ENCODE measurements at regions of chr19 and their contacts with region 1.

Region 1: DNA sequence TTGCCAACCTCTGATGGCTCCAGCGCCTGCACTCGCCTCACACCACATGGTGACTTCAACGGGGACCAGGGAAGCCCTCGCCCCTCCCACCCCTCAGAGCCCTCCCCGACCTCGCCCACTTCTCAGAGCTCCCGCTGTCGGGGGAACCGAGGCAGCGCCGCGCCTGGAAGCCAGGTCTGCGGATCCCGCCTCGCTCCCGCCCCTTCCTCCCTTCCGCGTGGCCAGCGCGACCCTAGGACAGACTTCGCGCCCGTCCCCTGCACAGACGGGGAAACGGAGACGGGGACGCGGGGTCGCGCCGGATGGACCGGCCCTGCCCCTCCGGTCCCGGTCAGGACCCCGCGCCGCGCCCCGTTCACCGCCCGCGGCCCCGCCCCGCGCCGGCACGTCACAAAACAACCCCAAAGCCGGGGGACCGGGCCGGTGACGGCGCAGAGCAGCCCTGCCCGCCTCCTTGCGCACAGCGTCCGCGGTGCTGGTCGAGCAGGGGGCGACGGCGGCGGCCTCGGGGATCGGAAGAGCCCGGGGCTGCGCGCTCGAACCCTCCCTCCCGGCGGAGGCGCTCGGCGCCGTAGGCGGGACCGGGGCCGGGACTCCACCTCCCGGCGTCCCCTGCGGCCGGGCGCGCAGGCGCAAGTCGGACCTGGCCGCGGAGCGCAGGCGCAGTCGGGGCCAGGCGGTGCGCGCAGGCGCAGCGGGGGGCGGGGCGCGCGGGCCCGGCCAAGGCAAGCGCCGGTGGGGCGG is 379 bp upstream of the CDC34 start:
- DNase-seq: peak; percentile 90
- H3K4me3 Mint-ChIP-seq: peak overlapping the region; percentile 81
- H3K27ac Mint-ChIP-seq: peak overlapping the region; percentile 80
- H3K4me1 Mint-ChIP-seq: peaks cover 12% of the 10 kb centered on the region
- H3K27me3 Mint-ChIP-seq: peaks cover 3% of the 10 kb centered on the region

Region 2: GRCh38 chr19:518603-519231 is 12.5 kb before region 1 on chr19:
- CTCF ChIA-PET with region 1: interaction called, 10 read pairs
- POLR2A ChIA-PET with region 1: interaction called, 4 read pairs
- intact Hi-C with region 1: no loop called
- DNase-seq: peak; percentile 66
- H3K4me3 Mint-ChIP-seq: no peak overlapping the region
- H3K27ac Mint-ChIP-seq: no peak overlapping the region
- H3K4me1 Mint-ChIP-seq: peaks cover 7% of the 10 kb centered on the region
- H3K27me3 Mint-ChIP-seq: no peaks in the 10 kb centered on the region

Region 3: DNA sequence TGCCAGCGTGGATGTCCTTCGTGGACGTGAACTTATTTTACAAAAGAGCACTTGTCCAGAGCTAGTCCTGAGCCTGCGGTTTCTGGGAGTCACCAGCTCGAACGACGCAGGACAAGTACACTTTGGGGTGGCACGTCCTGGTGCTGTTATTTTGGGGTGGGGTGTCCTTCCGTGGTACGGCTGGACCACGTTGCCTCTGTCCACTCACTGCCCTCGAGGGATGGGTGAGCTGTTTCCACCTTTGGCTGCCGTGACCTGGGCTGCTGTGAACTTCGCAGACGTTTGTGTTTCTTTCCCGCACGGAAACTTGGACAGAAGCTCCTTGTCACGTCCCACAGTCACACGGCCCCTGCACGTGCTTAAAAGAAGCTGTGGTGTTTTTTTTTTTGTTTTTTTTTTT is 23.6 kb after region 1 on chr19:
- CTCF ChIA-PET with region 1: no interaction called
- POLR2A ChIA-PET with region 1: no interaction called
- intact Hi-C with region 1: no loop called
- DNase-seq: no peak
- H3K4me3 Mint-ChIP-seq: no peak overlapping the region
- H3K27ac Mint-ChIP-seq: no peak overlapping the region
- H3K4me1 Mint-ChIP-seq: no peaks in the 10 kb centered on the region
- H3K27me3 Mint-ChIP-seq: no peaks in the 10 kb centered on the region

Measured in activated CD4-positive, alpha-beta memory T cell treated with anti-CD3 and anti-CD28 coated beads for 36 hours (primary cell).